ENCODE measurements at regions of chr5 and their contacts with region 1.

Region 1: DNA sequence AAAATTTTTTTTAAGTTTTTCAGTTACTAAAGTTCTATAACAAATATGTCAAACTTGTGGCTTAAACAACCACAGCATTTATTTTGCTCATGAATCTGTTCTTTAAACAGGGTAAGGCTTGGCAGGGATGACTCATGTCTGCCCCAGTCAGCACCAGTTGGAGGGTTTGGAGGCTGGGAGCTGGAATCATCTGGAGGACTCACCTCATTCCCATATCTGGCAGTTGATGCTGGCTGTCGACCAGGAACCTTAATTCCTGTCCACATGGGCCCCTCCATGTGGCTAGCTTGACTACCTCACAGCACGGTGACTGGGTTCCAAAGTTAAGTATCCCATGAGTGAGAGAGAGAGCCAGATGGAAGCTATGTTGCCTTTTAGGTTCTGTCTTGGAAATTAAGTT is 13.8 kb upstream of the CCL28 start:
- DNase-seq: no peak
- ATAC-seq: no peak
- H3K4me3 Mint-ChIP-seq: no peak overlapping the region
- H3K27ac Mint-ChIP-seq: no peak overlapping the region
- H3K4me1 Mint-ChIP-seq: no peaks in the 10 kb centered on the region
- H3K27me3 Mint-ChIP-seq: no peaks in the 10 kb centered on the region
- CTCF ChIP-seq: no peak

Region 2: GRCh38 chr5:43469702-43470366 is 43.9 kb after region 1 on chr5:
- CTCF ChIA-PET with region 1: no interaction called
- POLR2A ChIA-PET with region 1: no interaction called
- intact Hi-C with region 1: loop called (anchors 1 kb)
- DNase-seq: no peak
- ATAC-seq: no peak
- H3K4me3 Mint-ChIP-seq: no peak overlapping the region
- H3K27ac Mint-ChIP-seq: no peak overlapping the region
- H3K4me1 Mint-ChIP-seq: peaks cover 15% of the 10 kb centered on the region
- H3K27me3 Mint-ChIP-seq: no peaks in the 10 kb centered on the region
- CTCF ChIP-seq: no peak

Measured in activated B cell treated with CpG ODN at 0.5 μM for 24 hours (primary cell).